ENCODE measurements at regions of chr9 and their contacts with region 1.

Region 1: DNA sequence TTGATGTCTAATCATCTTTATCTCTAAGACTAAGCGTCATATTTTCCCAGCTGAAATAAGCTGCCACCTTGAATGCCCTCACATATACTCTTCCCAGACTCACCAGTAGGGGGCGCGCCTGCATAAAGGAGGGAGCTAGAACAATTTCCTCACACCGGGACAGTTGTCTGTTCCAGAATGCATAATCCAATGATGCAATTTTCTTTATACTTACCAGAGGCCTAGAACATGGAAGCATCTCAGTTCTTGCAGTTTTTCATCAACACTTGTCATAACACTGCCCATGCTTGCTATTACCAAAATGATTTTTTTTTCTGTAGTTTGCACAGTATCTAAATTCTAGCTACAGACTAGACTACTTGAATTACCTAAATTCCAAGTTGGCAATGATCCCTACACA is 203.9 kb downstream of the FRMD3 start:
- DNase-seq: peak; percentile 68 to 79
- ATAC-seq: peak; percentile 96 to 99
- H3K4me3 ChIP-seq: no peak overlapping the region
- H3K27ac ChIP-seq: no peak overlapping the region
- H3K4me1 ChIP-seq: peaks cover 0 to 3% of the 10 kb centered on the region in 2 donors
- H3K27me3 ChIP-seq: no peaks in the 10 kb centered on the region
- CTCF ChIP-seq: peak; percentile 88 to 98 (median 94)
- POLR2A ChIP-seq: no peak

Region 2: GRCh38 chr9:83219152-83219923 is 115.0 kb before region 1 on chr9:
- in situ Hi-C with region 1: loop called in 1 of 4 experiments (anchors 10 kb)
- intact Hi-C with region 1: loop called (anchors 5 kb)
- DNase-seq: peak; percentile 59 to 67
- ATAC-seq: peak; percentile 96 to 99
- H3K4me3 ChIP-seq: peak overlapping the region; percentile 61 to 62 (median 62)
- H3K27ac ChIP-seq: peak overlapping the region; percentile 45 to 63 (median 57)
- H3K4me1 ChIP-seq: peaks cover 5 to 11% of the 10 kb centered on the region in 2 donors
- H3K27me3 ChIP-seq: no peaks in the 10 kb centered on the region
- CTCF ChIP-seq: peak in 3 of 5 experiments; percentile 19 to 71 (median 49)
- POLR2A ChIP-seq: no peak

Region 3: GRCh38 chr9:83247732-83248131 is 86.6 kb before region 1 on chr9:
- in situ Hi-C with region 1: no loop called
- intact Hi-C with region 1: no loop called
- DNase-seq: no peak
- ATAC-seq: no peak
- H3K4me3 ChIP-seq: no peak overlapping the region
- H3K27ac ChIP-seq: no peak overlapping the region
- H3K4me1 ChIP-seq: peaks cover 7 to 8% of the 10 kb centered on the region in 2 donors
- H3K27me3 ChIP-seq: no peaks in the 10 kb centered on the region
- CTCF ChIP-seq: no peak
- POLR2A ChIP-seq: no peak

Region 4: GRCh38 chr9:83533296-83533695 is 199.0 kb after region 1 on chr9:
- in situ Hi-C with region 1: no loop called
- intact Hi-C with region 1: no loop called
- DNase-seq: no peak
- ATAC-seq: no peak
- H3K4me3 ChIP-seq: no peak overlapping the region
- H3K27ac ChIP-seq: no peak overlapping the region
- H3K4me1 ChIP-seq: peaks cover 9 to 10% of the 10 kb centered on the region in 2 donors
- H3K27me3 ChIP-seq: peaks cover 0 to 6% (median 0%) of the 10 kb centered on the region in 3 donors
- CTCF ChIP-seq: no peak
- POLR2A ChIP-seq: no peak

Region 5: DNA sequence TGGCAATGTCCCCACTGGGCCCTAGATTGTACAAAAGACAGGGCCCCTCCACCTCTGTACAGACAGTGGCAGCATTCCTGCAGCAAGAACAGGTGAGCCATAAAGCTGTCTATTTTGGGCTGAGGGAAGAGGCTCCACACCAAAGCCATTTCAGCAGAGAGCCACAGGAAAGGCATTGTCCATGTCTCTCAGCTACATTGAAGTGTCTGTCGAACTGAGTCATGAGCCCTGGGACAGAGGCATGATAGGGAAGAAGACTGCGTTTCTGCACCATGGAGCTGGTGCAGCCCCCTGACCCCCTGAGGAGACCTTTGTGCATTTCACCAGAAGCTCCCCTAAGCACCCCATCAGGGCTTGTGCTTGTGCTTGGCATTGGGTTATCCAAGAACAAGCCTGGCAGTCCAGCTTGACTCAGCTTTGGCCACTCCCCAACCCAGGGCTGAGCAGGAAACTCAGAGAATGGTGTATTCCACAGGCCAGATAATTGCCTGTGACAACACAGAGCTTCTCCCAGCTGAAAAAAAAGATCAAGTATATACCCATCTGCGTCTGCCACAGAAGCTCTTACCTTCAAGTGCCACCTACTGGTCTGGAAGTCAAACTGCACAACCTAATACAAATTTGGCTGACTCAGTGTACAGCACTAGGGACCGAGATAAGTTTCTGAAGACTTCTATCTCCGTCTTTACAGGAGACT is 209.8 kb after region 1 on chr9:
- in situ Hi-C with region 1: loop called in 3 of 4 experiments (anchors 5 to 10 kb)
- intact Hi-C with region 1: loop called (anchors 1 kb)
- DNase-seq: peak in 1 of 2 donors; percentile 21
- ATAC-seq: peak; percentile 80 to 89
- H3K4me3 ChIP-seq: no peak overlapping the region
- H3K27ac ChIP-seq: no peak overlapping the region
- H3K4me1 ChIP-seq: peaks cover under 1% of the 10 kb centered on the region in 2 donors
- H3K27me3 ChIP-seq: no peaks in the 10 kb centered on the region
- CTCF ChIP-seq: peak; percentile 61 to 79 (median 73)
- POLR2A ChIP-seq: no peak

Region 6: GRCh38 chr9:83649080-83649479 is 314.8 kb after region 1 on chr9:
- in situ Hi-C with region 1: loop called in 3 of 4 experiments (anchors 10 to 25 kb)
- intact Hi-C with region 1: no loop called
- DNase-seq: peak; percentile 14 to 60
- ATAC-seq: peak; percentile 61 to 80
- H3K4me3 ChIP-seq: no peak overlapping the region
- H3K27ac ChIP-seq: no peak overlapping the region
- H3K4me1 ChIP-seq: no peaks in the 10 kb centered on the region
- H3K27me3 ChIP-seq: no peaks in the 10 kb centered on the region
- CTCF ChIP-seq: peak; percentile 36 to 82 (median 72)
- POLR2A ChIP-seq: no peak

Region 7: GRCh38 chr9:83920927-83921707 is 586.8 kb after region 1 on chr9 and contains the start of gene KIF27:
- in situ Hi-C with region 1: loop called in 1 of 4 experiments (anchors 25 kb)
- intact Hi-C with region 1: loop called (anchors 10 kb)
- DNase-seq: peak; percentile 96 to 98
- ATAC-seq: peak; percentile 95
- H3K4me3 ChIP-seq: peak within 1 kb of the TSS; percentile 70 to 87 (median 80)
- H3K27ac ChIP-seq: peak within 1 kb of the TSS; percentile 91 to 95 (median 94)
- H3K4me1 ChIP-seq: peaks cover 4 to 10% of the 10 kb centered on the region in 2 donors
- H3K27me3 ChIP-seq: no peaks in the 10 kb centered on the region
- CTCF ChIP-seq: peak; percentile 44 to 62 (median 52)
- POLR2A ChIP-seq: peak; percentile 85 to 88
- total RNA-seq, gene KIF27: 1.7 to 4.1 (median 2.2) TPM